ENCODE measurements at regions of chr3 and their contacts with region 1.

Region 1: GRCh38 chr3:150703299-150704134 is at the start of gene ERICH6:
- DNase-seq: peak; percentile 59 to 77
- ATAC-seq: peak; percentile 94 to 97
- H3K4me3 ChIP-seq: peak within 1 kb of the TSS; percentile 54 to 73 (median 66)
- H3K27ac ChIP-seq: peak within 1 kb of the TSS; percentile 23 to 64 (median 60)
- H3K4me1 ChIP-seq: peaks cover 0 to 12% of the 10 kb centered on the region in 2 donors
- H3K27me3 ChIP-seq: no peaks in the 10 kb centered on the region
- CTCF ChIP-seq: peak in 2 of 5 experiments; percentile 14 to 21
- POLR2A ChIP-seq: no peak
- total RNA-seq, gene ERICH6: not detected

Region 2: GRCh38 chr3:150603153-150603979 is 100.2 kb before region 1 on chr3 and contains the start of gene SELENOT:
- in situ Hi-C with region 1: no loop called
- intact Hi-C with region 1: loop called (anchors 5 kb)
- DNase-seq: peak; percentile 88 to 95
- ATAC-seq: peak; percentile 94 to 96
- H3K4me3 ChIP-seq: peak within 1 kb of the TSS; percentile 75 to 95 (median 86)
- H3K27ac ChIP-seq: peak within 1 kb of the TSS; percentile 93 to 98 (median 96)
- H3K4me1 ChIP-seq: peaks cover 41 to 50% of the 10 kb centered on the region in 2 donors
- H3K27me3 ChIP-seq: no peaks in the 10 kb centered on the region
- CTCF ChIP-seq: peak; percentile 27 to 58 (median 49)
- POLR2A ChIP-seq: peak; percentile 93
- total RNA-seq, gene SELENOT: 69.6 to 83.1 (median 76.2) TPM

Region 3: GRCh38 chr3:150763122-150763841 is 59.8 kb after region 1 on chr3 and contains the start of gene SIAH2:
- in situ Hi-C with region 1: no loop called
- intact Hi-C with region 1: loop called (anchors 5 kb)
- DNase-seq: peak; percentile 85 to 88
- ATAC-seq: peak; percentile 79 to 84
- H3K4me3 ChIP-seq: peak within 1 kb of the TSS; percentile 61 to 80 (median 65)
- H3K27ac ChIP-seq: peak within 1 kb of the TSS; percentile 92 to 99 (median 96)
- H3K4me1 ChIP-seq: peaks cover 28 to 33% of the 10 kb centered on the region in 2 donors
- H3K27me3 ChIP-seq: no peaks in the 10 kb centered on the region
- CTCF ChIP-seq: peak in 1 of 5 experiments; percentile 21
- POLR2A ChIP-seq: peak; percentile 87 to 98
- total RNA-seq, gene SIAH2: 10.9 to 25.6 (median 20.0) TPM

Region 4: DNA sequence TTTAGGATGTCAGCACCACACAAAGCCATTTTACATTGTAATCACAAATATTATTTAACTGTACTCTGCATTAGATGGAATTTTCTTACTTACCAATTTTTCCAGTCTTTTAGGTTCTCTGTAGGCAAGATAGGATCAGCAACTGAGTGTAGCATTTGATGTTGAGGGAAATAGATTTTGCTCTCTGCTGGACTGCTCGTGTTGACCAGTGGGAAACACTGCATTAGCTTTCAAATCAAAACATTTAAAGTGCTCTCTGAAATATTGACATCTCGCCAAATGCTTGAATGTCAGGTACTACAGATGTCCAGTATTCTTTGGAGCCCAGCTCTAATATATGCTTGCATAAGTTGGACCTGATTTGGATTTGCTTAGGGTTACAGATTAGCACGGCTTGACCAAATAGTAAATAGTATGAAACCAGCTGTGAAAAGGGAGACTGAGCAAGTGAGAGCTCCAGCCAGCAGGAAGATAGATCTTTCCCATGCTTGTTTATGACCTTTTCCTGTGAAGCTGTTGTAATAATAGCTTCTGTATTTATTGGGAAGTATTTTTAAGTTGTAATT is 545.3 kb after region 1 on chr3:
- in situ Hi-C with region 1: no loop called
- intact Hi-C with region 1: no loop called
- DNase-seq: no peak
- ATAC-seq: no peak
- H3K4me3 ChIP-seq: peak overlapping the region in 2 of 4 donors; percentile 19 to 21
- H3K27ac ChIP-seq: peak overlapping the region; percentile 22 to 54 (median 32)
- H3K4me1 ChIP-seq: peaks cover 0 to under 1% of the 10 kb centered on the region in 2 donors
- H3K27me3 ChIP-seq: no peaks in the 10 kb centered on the region
- CTCF ChIP-seq: no peak
- POLR2A ChIP-seq: no peak

Measured in gastrocnemius medialis (tissue), 4 donors.